Activated B cell treated with CpG ODN at 0.5 μM for 24 hours (primary cell): ENCODE measurements at regions of chr6 and their contacts with region 1.

Region 1: GRCh38 chr6:49855221-49855620 is 11.1 kb downstream of the CRISP1 start:
- DNase-seq: no peak
- ATAC-seq: no peak
- H3K4me3 Mint-ChIP-seq: no peak overlapping the region
- H3K27ac Mint-ChIP-seq: no peak overlapping the region
- H3K4me1 Mint-ChIP-seq: no peaks in the 10 kb centered on the region
- H3K27me3 Mint-ChIP-seq: no peaks in the 10 kb centered on the region
- CTCF ChIP-seq: no peak

Region 2: GRCh38 chr6:49841424-49841823 is 13.8 kb before region 1 on chr6:
- CTCF ChIA-PET with region 1: no interaction called
- POLR2A ChIA-PET with region 1: no interaction called
- intact Hi-C with region 1: no loop called
- DNase-seq: no peak
- ATAC-seq: no peak
- H3K4me3 Mint-ChIP-seq: no peak overlapping the region
- H3K27ac Mint-ChIP-seq: no peak overlapping the region
- H3K4me1 Mint-ChIP-seq: no peaks in the 10 kb centered on the region
- H3K27me3 Mint-ChIP-seq: no peaks in the 10 kb centered on the region
- CTCF ChIP-seq: no peak

Region 3: GRCh38 chr6:49898904-49899566 is 43.8 kb after region 1 on chr6:
- CTCF ChIA-PET with region 1: no interaction called
- POLR2A ChIA-PET with region 1: no interaction called
- intact Hi-C with region 1: loop called (anchors 1 kb)
- DNase-seq: no peak
- ATAC-seq: no peak
- H3K4me3 Mint-ChIP-seq: no peak overlapping the region
- H3K27ac Mint-ChIP-seq: no peak overlapping the region
- H3K4me1 Mint-ChIP-seq: no peaks in the 10 kb centered on the region
- H3K27me3 Mint-ChIP-seq: no peaks in the 10 kb centered on the region
- CTCF ChIP-seq: no peak